Tibial artery (tissue), 4 donors: ENCODE measurements at regions of chr19 and their contacts with region 1.

Region 1: GRCh38 chr19:9796113-9796773 is 22.6 kb downstream of the FBXL12 start:
- DNase-seq: peak; percentile 87 to 90
- H3K4me3 ChIP-seq: no peak overlapping the region
- H3K27ac ChIP-seq: no peak overlapping the region
- H3K4me1 ChIP-seq: peaks cover 0 to 8% (median under 1%) of the 10 kb centered on the region in 4 donors
- H3K27me3 ChIP-seq: no peaks in the 10 kb centered on the region
- CTCF ChIP-seq: peak; percentile 76 to 83

Region 2: GRCh38 chr19:9309974-9310446 is 486.2 kb before region 1 on chr19:
- intact Hi-C with region 1: loop called (anchors 5 kb)
- DNase-seq: peak; percentile 91 to 95
- H3K4me3 ChIP-seq: peak overlapping the region; percentile 69 to 72
- H3K27ac ChIP-seq: peak overlapping the region; percentile 89 to 90
- H3K4me1 ChIP-seq: peaks cover 0 to 22% (median 8%) of the 10 kb centered on the region in 4 donors
- H3K27me3 ChIP-seq: no peaks in the 10 kb centered on the region
- CTCF ChIP-seq: no peak

Region 3: GRCh38 chr19:9721861-9722260 is 74.4 kb before region 1 on chr19:
- intact Hi-C with region 1: no loop called
- DNase-seq: no peak
- H3K4me3 ChIP-seq: no peak overlapping the region
- H3K27ac ChIP-seq: no peak overlapping the region
- H3K4me1 ChIP-seq: no peaks in the 10 kb centered on the region
- H3K27me3 ChIP-seq: no peaks in the 10 kb centered on the region
- CTCF ChIP-seq: no peak

Region 4: GRCh38 chr19:9818734-9819589 is 22.7 kb after region 1 on chr19 and contains the start of gene FBXL12:
- intact Hi-C with region 1: loop called (anchors 2 kb)
- DNase-seq: peak; percentile 100
- H3K4me3 ChIP-seq: peak within 1 kb of the TSS; percentile 88 to 99
- H3K27ac ChIP-seq: peak within 1 kb of the TSS; percentile 92 to 96
- H3K4me1 ChIP-seq: peaks cover 0 to 28% (median 20%) of the 10 kb centered on the region in 4 donors
- H3K27me3 ChIP-seq: no peaks in the 10 kb centered on the region
- CTCF ChIP-seq: no peak

Region 5: GRCh38 chr19:9835507-9835949 is 39.3 kb after region 1 on chr19:
- intact Hi-C with region 1: no loop called
- DNase-seq: no peak
- H3K4me3 ChIP-seq: peak overlapping the region; percentile 94 to 96
- H3K27ac ChIP-seq: peak overlapping the region; percentile 85
- H3K4me1 ChIP-seq: peaks cover 0 to 24% (median 13%) of the 10 kb centered on the region in 4 donors
- H3K27me3 ChIP-seq: no peaks in the 10 kb centered on the region
- CTCF ChIP-seq: no peak